ENCODE measurements at regions of chr20 and their contacts with region 1.

Region 1: GRCh38 chr20:17604852-17605660 is 35.2 kb downstream of the DSTN start:
- DNase-seq: no peak
- H3K4me3 ChIP-seq: no peak overlapping the region
- H3K27ac ChIP-seq: no peak overlapping the region
- H3K4me1 ChIP-seq: peaks cover 9 to 16% of the 10 kb centered on the region in 2 donors
- H3K27me3 ChIP-seq: no peaks in the 10 kb centered on the region
- CTCF ChIP-seq: no peak
- POLR2A ChIP-seq: no peak

Region 2: DNA sequence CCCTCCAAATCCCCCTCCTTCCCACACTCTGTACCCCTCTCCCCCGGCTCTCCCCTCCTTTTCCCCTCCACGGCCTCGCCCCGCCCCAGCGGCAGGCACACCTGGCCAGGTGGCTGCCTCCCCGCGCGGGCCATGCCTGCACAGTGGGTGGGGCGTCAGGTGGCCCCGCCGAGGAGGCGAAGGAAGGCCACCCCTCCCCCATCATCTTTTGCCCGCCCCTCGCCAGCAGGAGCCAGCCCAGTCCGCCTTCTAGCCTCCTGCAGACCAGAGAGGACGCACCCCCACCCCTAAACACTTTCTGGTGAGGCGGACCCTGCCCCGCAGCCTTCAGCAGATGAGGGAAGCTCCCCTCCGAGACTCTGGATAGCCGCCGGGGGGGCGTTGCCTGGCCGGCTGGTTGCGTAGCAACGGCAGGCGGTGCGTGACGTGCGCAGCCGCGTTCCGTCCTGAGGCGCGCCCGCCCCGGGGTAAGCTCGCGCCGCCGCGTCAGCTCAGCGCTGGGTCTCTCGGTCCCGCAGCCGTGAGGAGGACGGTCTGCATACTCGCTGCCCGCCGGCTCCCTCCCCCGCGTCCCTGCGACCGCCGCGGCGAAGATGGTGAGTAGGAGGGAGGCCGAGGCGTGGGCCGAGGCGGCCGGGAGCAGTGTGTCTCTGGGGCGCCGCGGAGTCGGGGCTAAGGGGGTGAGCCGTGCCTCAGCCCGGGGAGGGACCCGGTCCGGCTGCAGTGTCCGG is 35.3 kb before region 1 on chr20 and contains the start of gene DSTN:
- intact Hi-C with region 1: loop called (anchors 5 kb)
- DNase-seq: peak; percentile 94 to 96
- H3K4me3 ChIP-seq: peak within 1 kb of the TSS; percentile 72 to 77
- H3K27ac ChIP-seq: peak within 1 kb of the TSS; percentile 99 to 100
- H3K4me1 ChIP-seq: no peaks in the 10 kb centered on the region
- H3K27me3 ChIP-seq: no peaks in the 10 kb centered on the region
- CTCF ChIP-seq: no peak
- POLR2A ChIP-seq: peak; percentile 98 to 100
- total RNA-seq, gene DSTN: 294 to 674 (median 623) TPM

Region 3: DNA sequence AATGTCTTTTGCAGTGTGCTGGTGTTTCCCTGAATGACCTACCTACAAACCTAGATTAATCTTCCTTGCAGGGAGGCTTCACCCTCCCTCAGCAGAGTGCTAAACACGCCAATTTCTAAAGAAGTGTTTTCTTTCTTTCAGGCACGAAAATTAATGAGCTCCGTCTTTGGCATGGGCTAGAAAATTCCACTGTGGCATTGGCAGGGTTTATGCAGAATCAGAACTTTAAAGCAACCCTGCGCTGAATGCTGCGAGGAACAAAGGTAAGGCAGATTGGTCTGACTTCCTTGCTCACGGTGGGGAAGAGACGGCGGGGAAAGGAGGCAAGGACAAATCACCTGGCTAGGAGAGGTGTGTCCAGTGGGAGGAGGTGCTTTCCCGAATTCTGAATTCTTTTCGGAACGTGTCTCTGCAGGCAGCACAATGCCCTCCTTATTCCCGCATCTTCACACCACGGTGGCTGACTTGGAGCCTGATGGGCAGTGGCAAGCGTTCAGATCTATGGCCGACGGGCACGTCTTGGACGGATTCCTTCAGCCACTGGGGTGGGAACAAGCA is 88.5 kb after region 1 on chr20:
- intact Hi-C with region 1: no loop called
- DNase-seq: no peak
- H3K4me3 ChIP-seq: no peak overlapping the region
- H3K27ac ChIP-seq: no peak overlapping the region
- H3K4me1 ChIP-seq: no peaks in the 10 kb centered on the region
- H3K27me3 ChIP-seq: no peaks in the 10 kb centered on the region
- CTCF ChIP-seq: no peak
- POLR2A ChIP-seq: no peak